Endothelial cell of umbilical vein (primary cell): ENCODE measurements at regions of chr14 and their contacts with region 1.

Region 1: GRCh38 chr14:38721822-38722431 is 381.1 kb downstream of the SEC23A start:
- DNase-seq: peak; percentile 89
- H3K4me3 ChIP-seq: no peak overlapping the region
- H3K27ac ChIP-seq: no peak overlapping the region
- H3K4me1 ChIP-seq: no peaks in the 10 kb centered on the region
- H3K27me3 ChIP-seq: no peaks in the 10 kb centered on the region
- CTCF ChIP-seq: peak; percentile 72 to 78
- POLR2A ChIP-seq: no peak

Region 2: GRCh38 chr14:37903343-37904191 is 818.4 kb before region 1 on chr14:
- CTCF ChIA-PET with region 1: interaction called, 14 read pairs
- POLR2A ChIA-PET with region 1: no interaction called
- dilution Hi-C with region 1: no loop called
- intact Hi-C with region 1: loop called (anchors 5 kb)
- DNase-seq: peak; percentile 64
- H3K4me3 ChIP-seq: no peak overlapping the region
- H3K27ac ChIP-seq: no peak overlapping the region
- H3K4me1 ChIP-seq: peaks cover 3% of the 10 kb centered on the region
- H3K27me3 ChIP-seq: peaks cover 22 to 23% of the 10 kb centered on the region in 2 experiments
- CTCF ChIP-seq: peak; percentile 33 to 45
- POLR2A ChIP-seq: no peak

Region 3: GRCh38 chr14:38208618-38209562 is 513.0 kb before region 1 on chr14:
- CTCF ChIA-PET with region 1: interaction called, 5 read pairs
- POLR2A ChIA-PET with region 1: no interaction called
- dilution Hi-C with region 1: no loop called
- intact Hi-C with region 1: loop called (anchors 2 kb)
- DNase-seq: peak; percentile 47
- H3K4me3 ChIP-seq: peak overlapping the region; percentile 34 to 58 (median 44)
- H3K27ac ChIP-seq: no peak overlapping the region
- H3K4me1 ChIP-seq: peaks cover 36% of the 10 kb centered on the region
- H3K27me3 ChIP-seq: no peaks in the 10 kb centered on the region
- CTCF ChIP-seq: peak in 1 of 2 donors; percentile 48
- POLR2A ChIP-seq: no peak

Region 4: DNA sequence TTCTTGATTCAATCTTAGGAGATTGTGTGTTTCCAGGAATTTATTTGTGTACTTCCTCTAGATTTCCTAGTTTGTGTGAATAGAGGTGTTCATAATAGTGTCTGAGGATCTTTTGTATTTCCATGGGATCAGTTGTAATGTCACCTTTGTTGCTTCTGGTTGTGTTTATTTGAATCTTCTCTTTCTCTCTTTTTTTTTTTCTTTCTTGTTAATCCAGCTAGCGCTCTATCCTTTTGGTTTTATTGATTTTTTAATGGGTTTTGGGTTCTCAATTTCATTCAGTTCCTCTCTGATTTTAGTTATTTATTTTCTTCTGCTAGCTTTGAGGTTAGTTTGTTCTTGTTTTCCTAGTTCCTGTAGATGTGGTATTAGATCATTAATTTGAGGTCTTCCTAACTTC is 138.6 kb after region 1 on chr14:
- CTCF ChIA-PET with region 1: interaction called, 26 read pairs
- POLR2A ChIA-PET with region 1: no interaction called
- dilution Hi-C with region 1: loop called (anchors 25 kb)
- intact Hi-C with region 1: no loop called
- DNase-seq: no peak
- H3K4me3 ChIP-seq: no peak overlapping the region
- H3K27ac ChIP-seq: no peak overlapping the region
- H3K4me1 ChIP-seq: no peaks in the 10 kb centered on the region
- H3K27me3 ChIP-seq: no peaks in the 10 kb centered on the region
- CTCF ChIP-seq: no peak
- POLR2A ChIP-seq: no peak

Region 5: GRCh38 chr14:38989922-38990546 is 268.1 kb after region 1 on chr14:
- CTCF ChIA-PET with region 1: interaction called, 10 read pairs
- POLR2A ChIA-PET with region 1: no interaction called
- dilution Hi-C with region 1: no loop called
- intact Hi-C with region 1: no loop called
- DNase-seq: peak; percentile 15
- H3K4me3 ChIP-seq: no peak overlapping the region
- H3K27ac ChIP-seq: no peak overlapping the region
- H3K4me1 ChIP-seq: peaks cover 38% of the 10 kb centered on the region
- H3K27me3 ChIP-seq: no peaks in the 10 kb centered on the region
- CTCF ChIP-seq: no peak
- POLR2A ChIP-seq: no peak

Region 6: GRCh38 chr14:39034481-39035296 is 312.8 kb after region 1 on chr14:
- CTCF ChIA-PET with region 1: interaction called, 40 read pairs
- POLR2A ChIA-PET with region 1: no interaction called
- dilution Hi-C with region 1: no loop called
- intact Hi-C with region 1: no loop called
- DNase-seq: peak; percentile 53
- H3K4me3 ChIP-seq: no peak overlapping the region
- H3K27ac ChIP-seq: no peak overlapping the region
- H3K4me1 ChIP-seq: no peaks in the 10 kb centered on the region
- H3K27me3 ChIP-seq: no peaks in the 10 kb centered on the region
- CTCF ChIP-seq: peak; percentile 36 to 41
- POLR2A ChIP-seq: no peak